MCF 10A (cell line): ENCODE measurements at regions of chr6 and their contacts with region 1.

Region 1: DNA sequence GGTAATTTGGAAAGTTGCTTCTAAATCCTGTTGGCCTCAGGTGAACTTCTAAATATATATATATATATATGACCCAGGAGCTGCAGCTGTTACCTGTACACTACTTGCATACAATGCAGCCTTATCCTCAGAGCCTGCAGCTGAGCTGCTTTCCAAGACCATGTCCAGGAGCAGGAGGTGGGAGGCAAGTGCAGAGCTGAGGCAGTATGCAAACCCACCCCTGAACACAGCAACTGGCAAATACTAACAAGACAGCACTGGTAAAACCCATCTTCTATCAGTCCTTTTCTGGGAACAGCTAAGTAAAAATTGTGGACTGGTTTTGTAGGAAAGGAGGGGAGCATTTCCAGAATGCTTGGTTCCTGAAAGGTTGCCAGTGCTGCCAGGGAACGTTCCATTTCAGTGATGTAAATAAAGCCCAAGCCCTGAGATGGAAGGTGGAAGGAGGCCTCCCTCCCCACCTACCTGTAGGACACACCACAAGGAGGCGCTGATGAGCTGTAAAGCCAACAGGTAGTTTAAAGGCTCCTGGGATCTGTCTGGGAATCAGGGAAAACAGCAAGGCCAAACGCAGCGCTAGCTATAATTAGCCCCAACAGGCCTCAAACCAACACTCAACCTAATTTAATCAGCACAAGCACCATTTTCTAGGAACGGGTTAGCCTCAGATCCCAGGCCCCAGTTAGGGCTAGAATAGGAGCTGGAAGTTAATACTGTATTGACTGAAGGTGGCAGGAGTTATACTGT is 93.8 kb upstream of the MAP7 start:
- DNase-seq: peak; percentile 94
- H3K4me3 Mint-ChIP-seq: no peak overlapping the region
- H3K27ac Mint-ChIP-seq: peak overlapping the region; percentile 16
- H3K4me1 Mint-ChIP-seq: peaks cover 6% of the 10 kb centered on the region
- H3K27me3 Mint-ChIP-seq: no peaks in the 10 kb centered on the region
- CTCF ChIP-seq: peak; percentile 73

Region 2: GRCh38 chr6:136526196-136526930 is 117.7 kb before region 1 on chr6:
- CTCF ChIA-PET with region 1: no interaction called
- POLR2A ChIA-PET with region 1: no interaction called
- intact Hi-C with region 1: no loop called
- DNase-seq: no peak
- H3K4me3 Mint-ChIP-seq: no peak overlapping the region
- H3K27ac Mint-ChIP-seq: no peak overlapping the region
- H3K4me1 Mint-ChIP-seq: no peaks in the 10 kb centered on the region
- H3K27me3 Mint-ChIP-seq: no peaks in the 10 kb centered on the region
- CTCF ChIP-seq: no peak

Region 3: GRCh38 chr6:136582711-136583471 is 61.1 kb before region 1 on chr6:
- CTCF ChIA-PET with region 1: interaction called, 25 read pairs
- POLR2A ChIA-PET with region 1: interaction called, 4 read pairs
- intact Hi-C with region 1: loop called (anchors 1 kb)
- DNase-seq: peak; percentile 76
- H3K4me3 Mint-ChIP-seq: no peak overlapping the region
- H3K27ac Mint-ChIP-seq: peak overlapping the region; percentile 96
- H3K4me1 Mint-ChIP-seq: peaks cover 23% of the 10 kb centered on the region
- H3K27me3 Mint-ChIP-seq: no peaks in the 10 kb centered on the region
- CTCF ChIP-seq: peak; percentile 47

Region 4: GRCh38 chr6:136628996-136629395 is 15.0 kb before region 1 on chr6:
- CTCF ChIA-PET with region 1: interaction called, 26 read pairs
- POLR2A ChIA-PET with region 1: no interaction called
- intact Hi-C with region 1: no loop called
- DNase-seq: peak; percentile 46
- H3K4me3 Mint-ChIP-seq: no peak overlapping the region
- H3K27ac Mint-ChIP-seq: peak overlapping the region; percentile 39
- H3K4me1 Mint-ChIP-seq: no peaks in the 10 kb centered on the region
- H3K27me3 Mint-ChIP-seq: no peaks in the 10 kb centered on the region
- CTCF ChIP-seq: no peak

Region 5: DNA sequence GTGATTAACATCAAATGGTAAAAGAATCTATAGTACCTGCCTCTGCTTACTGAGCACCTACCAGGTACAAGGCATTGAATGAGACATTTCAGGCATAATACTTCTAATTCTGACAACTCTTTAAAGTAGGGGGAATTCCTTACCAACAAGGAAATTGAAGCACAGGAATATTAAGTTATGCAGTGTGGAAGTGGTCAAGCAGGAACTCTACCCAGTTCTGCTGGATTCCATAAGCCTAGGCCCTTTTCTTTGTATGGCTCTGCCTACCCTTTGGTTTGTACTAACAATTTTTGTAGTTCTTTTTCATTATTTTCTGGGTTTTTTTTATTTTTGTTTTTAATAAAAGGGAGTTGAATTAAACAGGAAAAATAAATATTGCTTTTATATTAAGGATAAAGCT is 33.8 kb after region 1 on chr6:
- CTCF ChIA-PET with region 1: interaction called, 10 read pairs
- POLR2A ChIA-PET with region 1: no interaction called
- intact Hi-C with region 1: no loop called
- DNase-seq: no peak
- H3K4me3 Mint-ChIP-seq: no peak overlapping the region
- H3K27ac Mint-ChIP-seq: no peak overlapping the region
- H3K4me1 Mint-ChIP-seq: no peaks in the 10 kb centered on the region
- H3K27me3 Mint-ChIP-seq: no peaks in the 10 kb centered on the region
- CTCF ChIP-seq: no peak

Region 6: GRCh38 chr6:136719280-136720044 is 75.4 kb after region 1 on chr6:
- CTCF ChIA-PET with region 1: interaction called, 11 read pairs
- POLR2A ChIA-PET with region 1: no interaction called
- intact Hi-C with region 1: no loop called
- DNase-seq: no peak
- H3K4me3 Mint-ChIP-seq: no peak overlapping the region
- H3K27ac Mint-ChIP-seq: peak overlapping the region; percentile 61
- H3K4me1 Mint-ChIP-seq: peaks cover 22% of the 10 kb centered on the region
- H3K27me3 Mint-ChIP-seq: no peaks in the 10 kb centered on the region
- CTCF ChIP-seq: no peak

Region 7: DNA sequence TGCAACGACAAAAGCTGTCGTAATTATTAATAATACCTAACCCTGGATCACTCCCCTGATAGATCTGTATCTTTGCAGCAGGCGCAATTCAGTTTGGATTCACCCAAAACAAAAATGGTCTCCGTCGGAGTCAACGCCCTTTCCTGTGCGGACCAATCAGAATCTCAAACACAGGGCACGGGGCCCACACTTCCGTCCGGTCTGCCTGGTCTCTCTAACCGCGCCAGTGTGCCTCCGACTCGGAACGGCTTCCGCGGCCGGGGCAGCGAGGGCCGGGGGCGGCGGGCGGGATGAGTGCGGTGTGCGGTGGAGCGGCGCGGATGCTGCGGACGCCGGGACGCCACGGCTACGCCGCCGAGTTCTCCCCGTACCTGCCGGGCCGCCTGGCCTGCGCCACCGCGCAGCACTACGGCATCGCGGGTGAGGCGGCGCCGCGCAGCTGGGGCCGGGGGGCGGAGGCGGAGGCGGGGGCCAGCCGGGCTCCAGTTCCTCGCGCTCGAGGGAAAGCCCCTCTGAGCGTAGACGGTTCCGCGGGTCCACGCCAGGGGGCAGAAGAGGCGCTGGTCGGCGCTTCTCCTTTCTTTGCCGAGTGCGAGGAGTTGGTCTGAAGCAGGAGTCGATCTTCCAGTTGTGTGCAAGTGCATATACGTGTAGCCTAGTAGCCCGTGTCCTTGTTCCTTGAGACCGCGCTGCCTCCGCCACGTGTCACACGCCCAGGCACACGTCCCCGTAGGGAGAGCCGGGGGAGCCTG is 178.5 kb after region 1 on chr6 and contains the start of gene PEX7:
- CTCF ChIA-PET with region 1: interaction called, 10 read pairs
- POLR2A ChIA-PET with region 1: interaction called, 5 read pairs
- intact Hi-C with region 1: no loop called
- DNase-seq: peak; percentile 93
- H3K4me3 Mint-ChIP-seq: peak within 1 kb of the TSS; percentile 81
- H3K27ac Mint-ChIP-seq: peak within 1 kb of the TSS; percentile 86
- H3K4me1 Mint-ChIP-seq: no peaks in the 10 kb centered on the region
- H3K27me3 Mint-ChIP-seq: no peaks in the 10 kb centered on the region
- CTCF ChIP-seq: peak; percentile 36
- total RNA-seq, gene PEX7: 6.0 and 8.2 TPM in 2 replicates

Region 8: GRCh38 chr6:137001299-137001976 is 357.4 kb after region 1 on chr6:
- CTCF ChIA-PET with region 1: no interaction called
- POLR2A ChIA-PET with region 1: no interaction called
- intact Hi-C with region 1: no loop called
- DNase-seq: peak; percentile 74
- H3K4me3 Mint-ChIP-seq: no peak overlapping the region
- H3K27ac Mint-ChIP-seq: no peak overlapping the region
- H3K4me1 Mint-ChIP-seq: peaks cover 23% of the 10 kb centered on the region
- H3K27me3 Mint-ChIP-seq: no peaks in the 10 kb centered on the region
- CTCF ChIP-seq: no peak